Mammary epithelial cell (primary cell): ENCODE measurements at regions of chr1 and their contacts with region 1.

Region 1: DNA sequence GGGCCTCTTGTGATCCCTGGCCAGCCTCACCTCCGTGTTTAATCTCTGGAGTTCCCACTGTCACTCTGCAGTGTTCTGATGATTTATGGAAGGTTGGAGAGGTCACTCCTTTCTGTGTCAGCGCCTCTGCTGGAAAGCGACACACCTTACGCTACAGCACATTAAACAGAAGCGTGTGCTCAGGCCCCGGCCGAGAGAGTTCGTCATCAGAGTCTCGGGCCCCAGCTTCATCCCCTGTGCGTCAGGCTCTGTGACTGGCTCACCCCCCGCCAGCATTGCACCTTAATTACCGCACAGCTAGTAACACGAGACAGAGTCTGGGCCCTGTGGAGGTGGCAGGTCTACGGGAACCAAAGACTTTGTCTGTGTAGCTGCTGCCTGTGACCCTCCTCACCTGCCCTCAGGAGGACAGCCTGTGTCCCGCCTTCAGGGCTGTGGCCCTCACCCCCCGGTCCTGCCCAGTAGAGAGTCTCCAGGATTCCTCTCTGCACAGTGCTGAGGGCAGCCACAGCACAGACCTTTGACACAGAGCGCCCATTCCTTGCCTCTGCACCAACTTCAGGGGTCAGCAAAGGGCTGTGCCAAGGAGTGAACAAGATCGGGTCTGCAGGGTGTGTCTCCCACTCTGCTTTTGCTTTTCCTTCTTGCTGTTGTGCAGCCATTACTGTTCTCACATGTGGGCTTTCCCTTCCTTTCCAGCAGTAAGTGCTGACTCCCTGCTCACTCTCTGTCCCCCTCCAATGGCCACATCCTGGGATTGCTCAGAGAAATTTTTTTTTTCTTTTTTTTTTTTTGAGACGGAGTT is 157.6 kb downstream of the PGBD5 start:
- DNase-seq: peak; percentile 23
- H3K4me3 ChIP-seq: no peak overlapping the region
- H3K27ac ChIP-seq: no peak overlapping the region
- H3K4me1 ChIP-seq: no peaks in the 10 kb centered on the region
- H3K27me3 ChIP-seq: no peaks in the 10 kb centered on the region
- CTCF ChIP-seq: peak; percentile 46 to 54

Region 2: GRCh38 chr1:229661022-229661877 is 607.3 kb before region 1 on chr1:
- CTCF ChIA-PET with region 1: no interaction called
- dilution Hi-C with region 1: no loop called
- in situ Hi-C with region 1: no loop called
- intact Hi-C with region 1: loop called (anchors 1 kb)
- DNase-seq: peak; percentile 51
- H3K4me3 ChIP-seq: no peak overlapping the region
- H3K27ac ChIP-seq: no peak overlapping the region
- H3K4me1 ChIP-seq: peaks cover 8% of the 10 kb centered on the region
- H3K27me3 ChIP-seq: no peaks in the 10 kb centered on the region
- CTCF ChIP-seq: peak; percentile 87 to 96

Region 3: GRCh38 chr1:230104395-230105244 is 163.9 kb before region 1 on chr1:
- CTCF ChIA-PET with region 1: no interaction called
- dilution Hi-C with region 1: no loop called
- in situ Hi-C with region 1: no loop called
- intact Hi-C with region 1: loop called (anchors 10 kb)
- DNase-seq: peak; percentile 99
- H3K4me3 ChIP-seq: peak overlapping the region in 1 of 3 experiments; percentile 12
- H3K27ac ChIP-seq: peak overlapping the region; percentile 75
- H3K4me1 ChIP-seq: peaks cover 36% of the 10 kb centered on the region
- H3K27me3 ChIP-seq: no peaks in the 10 kb centered on the region
- CTCF ChIP-seq: no peak